IMR-90 (cell line): ENCODE measurements at regions of chr1 and their contacts with region 1.

Region 1: DNA sequence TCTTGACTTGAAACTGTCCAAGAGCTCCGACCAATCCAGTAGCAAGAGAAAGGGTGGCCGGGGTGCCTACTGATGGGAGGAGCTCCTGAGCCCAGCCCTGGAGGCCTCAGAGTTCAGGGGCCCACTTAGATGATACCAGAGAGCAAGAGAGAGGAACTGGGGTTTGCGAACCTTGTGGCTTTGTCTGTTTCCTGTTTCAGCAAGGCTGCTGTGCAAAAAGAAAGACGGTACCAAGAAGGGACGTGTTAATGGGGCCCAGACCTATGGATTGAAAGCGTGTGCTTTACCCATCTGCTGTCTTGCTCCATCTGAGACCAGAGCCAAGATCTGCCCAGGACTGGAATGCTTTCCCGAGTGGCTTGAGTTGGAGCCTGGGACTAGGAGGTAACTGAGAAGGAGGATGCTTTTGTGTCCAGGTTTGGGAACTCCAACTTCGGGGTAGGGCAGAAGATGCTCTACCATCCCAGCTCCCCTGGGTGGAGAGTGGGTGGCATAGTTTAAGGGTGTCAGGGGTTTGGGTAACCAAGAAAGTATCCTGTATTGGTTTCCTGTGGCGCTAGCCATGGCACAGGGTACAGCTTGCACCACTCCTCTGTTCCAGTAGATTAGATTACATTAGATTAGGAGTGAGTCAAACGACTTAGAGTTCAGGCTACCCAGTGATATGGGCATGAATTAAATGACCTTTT is at the start of gene TRAF3IP3:
- DNase-seq: no peak
- ATAC-seq: no peak
- H3K4me3 ChIP-seq: no peak within 1 kb of the TSS
- H3K27ac ChIP-seq: no peak within 1 kb of the TSS
- H3K4me1 ChIP-seq: no peaks in the 10 kb centered on the region
- H3K27me3 ChIP-seq: peaks cover 11% of the 10 kb centered on the region; the same call in 1 of the 2 replicates
- CTCF ChIP-seq: no peak
- POLR2A ChIP-seq: no peak
- RAD21 ChIP-seq: no peak
- total RNA-seq, gene TRAF3IP3: 0.18 TPM in 1 of 2 replicates, not detected in the other

Region 2: GRCh38 chr1:208809876-208810275 is 946.2 kb before region 1 on chr1:
- CTCF ChIA-PET with region 1: no interaction called
- POLR2A ChIA-PET with region 1: no interaction called
- dilution Hi-C with region 1: no loop called
- in situ Hi-C with region 1: no loop called
- intact Hi-C with region 1: no loop called
- DNase-seq: no peak
- ATAC-seq: no peak
- H3K4me3 ChIP-seq: no peak overlapping the region
- H3K27ac ChIP-seq: no peak overlapping the region
- H3K4me1 ChIP-seq: no peaks in the 10 kb centered on the region
- H3K27me3 ChIP-seq: no peaks in the 10 kb centered on the region
- CTCF ChIP-seq: no peak
- POLR2A ChIP-seq: no peak
- RAD21 ChIP-seq: no peak

Region 3: GRCh38 chr1:209576798-209577197 is 179.3 kb before region 1 on chr1:
- CTCF ChIA-PET with region 1: no interaction called
- POLR2A ChIA-PET with region 1: no interaction called
- dilution Hi-C with region 1: no loop called
- in situ Hi-C with region 1: loop called (anchors 5 kb)
- intact Hi-C with region 1: no loop called
- DNase-seq: peak; percentile 58
- ATAC-seq: peak; percentile 99
- H3K4me3 ChIP-seq: no peak overlapping the region
- H3K27ac ChIP-seq: no peak overlapping the region
- H3K4me1 ChIP-seq: no peaks in the 10 kb centered on the region
- H3K27me3 ChIP-seq: peaks cover 14% of the 10 kb centered on the region
- CTCF ChIP-seq: peak; percentile 91
- POLR2A ChIP-seq: no peak; the same call in 1 of the 2 replicates
- RAD21 ChIP-seq: peak; percentile 89